MCF 10A (cell line): ENCODE measurements at regions of chrX and their contacts with region 1.

Region 1: GRCh38 chrX:105460376-105460775 is 239.9 kb upstream of the TEX13A start:
- DNase-seq: peak; percentile 51
- H3K4me3 Mint-ChIP-seq: peak overlapping the region; percentile 2
- H3K27ac Mint-ChIP-seq: peak overlapping the region; percentile 78
- H3K4me1 Mint-ChIP-seq: peaks cover 11% of the 10 kb centered on the region
- H3K27me3 Mint-ChIP-seq: peaks cover 67% of the 10 kb centered on the region
- CTCF ChIP-seq: no peak

Region 2: GRCh38 chrX:105282077-105282476 is 178.3 kb before region 1 on chrX:
- CTCF ChIA-PET with region 1: no interaction called
- POLR2A ChIA-PET with region 1: no interaction called
- intact Hi-C with region 1: no loop called
- DNase-seq: no peak
- H3K4me3 Mint-ChIP-seq: no peak overlapping the region
- H3K27ac Mint-ChIP-seq: no peak overlapping the region
- H3K4me1 Mint-ChIP-seq: peaks cover 3% of the 10 kb centered on the region
- H3K27me3 Mint-ChIP-seq: peaks cover 61% of the 10 kb centered on the region
- CTCF ChIP-seq: no peak

Region 3: GRCh38 chrX:105483011-105483410 is 22.6 kb after region 1 on chrX:
- CTCF ChIA-PET with region 1: no interaction called
- POLR2A ChIA-PET with region 1: interaction called, 12 read pairs
- intact Hi-C with region 1: no loop called
- DNase-seq: peak; percentile 63
- H3K4me3 Mint-ChIP-seq: peak overlapping the region; percentile 13
- H3K27ac Mint-ChIP-seq: peak overlapping the region; percentile 84
- H3K4me1 Mint-ChIP-seq: peaks cover 15% of the 10 kb centered on the region
- H3K27me3 Mint-ChIP-seq: peaks cover 31% of the 10 kb centered on the region
- CTCF ChIP-seq: no peak

Region 4: DNA sequence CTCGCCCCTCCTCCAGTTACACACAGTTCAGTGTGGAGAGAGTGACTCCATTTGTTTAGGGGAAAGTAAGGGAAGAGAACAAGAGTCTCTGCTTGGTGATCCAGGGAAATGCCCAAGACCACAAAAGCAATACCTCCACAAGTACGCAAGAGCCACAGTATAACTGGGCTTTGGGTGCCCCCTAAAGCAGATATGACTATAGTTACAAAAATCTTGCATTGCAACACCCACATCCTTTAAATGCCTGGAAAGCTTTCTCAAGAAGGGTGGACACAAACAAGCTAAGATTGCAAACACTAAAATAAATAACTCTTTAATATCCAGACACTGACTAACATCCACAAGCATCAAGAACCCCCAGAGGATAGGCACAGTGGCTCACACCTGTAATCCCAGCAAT is 197.8 kb after region 1 on chrX:
- CTCF ChIA-PET with region 1: no interaction called
- POLR2A ChIA-PET with region 1: no interaction called
- intact Hi-C with region 1: no loop called
- DNase-seq: peak; percentile 65
- H3K4me3 Mint-ChIP-seq: no peak overlapping the region
- H3K27ac Mint-ChIP-seq: no peak overlapping the region
- H3K4me1 Mint-ChIP-seq: no peaks in the 10 kb centered on the region
- H3K27me3 Mint-ChIP-seq: peaks cover 54% of the 10 kb centered on the region
- CTCF ChIP-seq: no peak

Region 5: GRCh38 chrX:105695451-105695850 is 235.1 kb after region 1 on chrX:
- CTCF ChIA-PET with region 1: no interaction called
- POLR2A ChIA-PET with region 1: no interaction called
- intact Hi-C with region 1: loop called (anchors 10 kb)
- DNase-seq: peak; percentile 65
- H3K4me3 Mint-ChIP-seq: no peak overlapping the region
- H3K27ac Mint-ChIP-seq: no peak overlapping the region
- H3K4me1 Mint-ChIP-seq: no peaks in the 10 kb centered on the region
- H3K27me3 Mint-ChIP-seq: peaks cover 80% of the 10 kb centered on the region
- CTCF ChIP-seq: no peak